ENCODE measurements at regions of chr20 and their contacts with region 1.

Region 1: DNA sequence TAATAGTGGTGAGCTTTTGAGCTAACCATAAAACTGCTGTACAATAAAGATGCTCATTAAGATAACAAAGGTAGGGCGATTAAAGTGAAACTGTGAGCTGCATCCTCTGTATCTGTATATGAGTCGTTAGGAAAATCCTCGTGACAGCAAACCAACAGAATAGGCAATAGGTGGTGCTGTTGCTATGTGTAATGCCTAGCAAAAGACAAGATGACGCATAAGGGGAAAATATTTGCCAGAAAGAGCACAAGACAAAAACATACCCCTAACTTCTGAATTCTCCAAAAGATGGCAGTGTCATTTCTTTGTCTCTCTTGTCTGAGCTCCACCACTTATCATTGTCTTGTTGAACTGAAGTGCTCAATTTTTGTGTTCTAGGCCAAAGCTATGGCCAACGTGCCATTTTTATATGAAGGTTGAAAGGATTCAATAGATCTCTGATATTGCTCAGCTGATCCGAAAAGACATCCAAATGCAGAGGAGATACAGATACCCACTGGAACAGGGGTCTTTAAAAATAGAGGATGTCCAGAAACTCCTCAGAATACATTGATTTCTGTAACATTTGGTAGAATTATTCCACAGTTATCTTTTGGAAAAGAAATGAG is 56.3 kb upstream of the ANKEF1 start:
- DNase-seq: peak in 3 of 6 donors; percentile 37 to 57 (median 52)
- ATAC-seq: peak; percentile 97 to 99 (median 98)
- H3K4me3 ChIP-seq: no peak overlapping the region
- H3K27ac ChIP-seq: no peak overlapping the region
- H3K4me1 ChIP-seq: peaks cover 0 to 4% (median 0%) of the 10 kb centered on the region in 3 donors
- H3K27me3 ChIP-seq: no peaks in the 10 kb centered on the region
- CTCF ChIP-seq: peak; percentile 32 to 66 (median 60)

Region 2: GRCh38 chr20:10427060-10427692 is 448.7 kb after region 1 on chr20:
- intact Hi-C with region 1: loop called in 1 of 3 experiments (anchors 5 kb)
- DNase-seq: peak in 5 of 6 donors; percentile 16 to 66 (median 44)
- ATAC-seq: peak; percentile 59 to 81 (median 74)
- H3K4me3 ChIP-seq: no peak overlapping the region
- H3K27ac ChIP-seq: no peak overlapping the region
- H3K4me1 ChIP-seq: peaks cover 7 to 24% (median 19%) of the 10 kb centered on the region in 3 donors
- H3K27me3 ChIP-seq: no peaks in the 10 kb centered on the region
- CTCF ChIP-seq: peak; percentile 28 to 58 (median 56)